Activated T-helper 2 cell treated with anti-CD3 and anti-CD28 coated beads, Interferon-gamma antibody, Interleukin-2, Interleukin-4, amounts not matched to agents 10 μg/mL and 5 μg/mL and 100 μg/mL, durations not matched to agents 14 hours and 24 hours and 36 hours (primary cell): ENCODE measurements at regions of chr5 and their contacts with region 1.

Region 1: GRCh38 chr5:1344975-1345838 is at the start of gene CLPTM1L:
- DNase-seq: peak; percentile 86
- H3K4me3 Mint-ChIP-seq: peak within 1 kb of the TSS; percentile 93
- H3K27ac Mint-ChIP-seq: peak within 1 kb of the TSS; percentile 89
- H3K4me1 Mint-ChIP-seq: peaks cover 19% of the 10 kb centered on the region
- H3K27me3 Mint-ChIP-seq: no peaks in the 10 kb centered on the region
- total RNA-seq, gene CLPTM1L: 102 and 107 TPM in 2 replicates

Region 2: GRCh38 chr5:902129-902916 is 442.9 kb before region 1 on chr5:
- intact Hi-C with region 1: no loop called
- DNase-seq: no peak
- H3K4me3 Mint-ChIP-seq: no peak overlapping the region
- H3K27ac Mint-ChIP-seq: no peak overlapping the region
- H3K4me1 Mint-ChIP-seq: no peaks in the 10 kb centered on the region
- H3K27me3 Mint-ChIP-seq: no peaks in the 10 kb centered on the region

Region 3: GRCh38 chr5:1199649-1200494 is 145.3 kb before region 1 on chr5:
- intact Hi-C with region 1: no loop called
- DNase-seq: no peak
- H3K4me3 Mint-ChIP-seq: no peak overlapping the region
- H3K27ac Mint-ChIP-seq: no peak overlapping the region
- H3K4me1 Mint-ChIP-seq: no peaks in the 10 kb centered on the region
- H3K27me3 Mint-ChIP-seq: no peaks in the 10 kb centered on the region

Region 4: DNA sequence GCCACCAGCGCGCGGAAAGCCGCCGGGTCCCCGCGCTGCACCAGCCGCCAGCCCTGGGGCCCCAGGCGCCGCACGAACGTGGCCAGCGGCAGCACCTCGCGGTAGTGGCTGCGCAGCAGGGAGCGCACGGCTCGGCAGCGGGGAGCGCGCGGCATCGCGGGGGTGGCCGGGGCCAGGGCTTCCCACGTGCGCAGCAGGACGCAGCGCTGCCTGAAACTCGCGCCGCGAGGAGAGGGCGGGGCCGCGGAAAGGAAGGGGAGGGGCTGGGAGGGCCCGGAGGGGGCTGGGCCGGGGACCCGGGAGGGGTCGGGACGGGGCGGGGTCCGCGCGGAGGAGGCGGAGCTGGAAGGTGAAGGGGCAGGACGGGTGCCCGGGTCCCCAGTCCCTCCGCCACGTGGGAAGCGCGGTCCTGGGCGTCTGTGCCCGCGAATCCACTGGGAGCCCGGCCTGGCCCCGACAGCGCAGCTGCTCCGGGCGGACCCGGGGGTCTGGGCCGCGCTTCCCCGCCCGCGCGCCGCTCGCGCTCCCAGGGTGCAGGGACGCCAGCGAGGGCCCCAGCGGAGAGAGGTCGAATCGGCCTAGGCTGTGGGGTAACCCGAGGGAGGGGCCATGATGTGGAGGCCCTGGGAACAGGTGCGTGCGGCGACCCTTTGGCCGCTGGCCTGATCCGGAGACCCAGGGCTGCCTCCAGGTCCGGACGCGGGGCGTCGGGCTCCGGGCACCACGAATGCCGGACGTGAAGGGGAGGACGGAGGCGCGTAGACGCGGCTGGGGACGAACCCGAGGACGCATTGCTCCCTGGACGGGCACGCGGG is 50.2 kb before region 1 on chr5 and contains the start of gene TERT:
- intact Hi-C with region 1: loop called (anchors 10 kb)
- DNase-seq: peak; percentile 66
- H3K4me3 Mint-ChIP-seq: peak within 1 kb of the TSS; percentile 60
- H3K27ac Mint-ChIP-seq: no peak within 1 kb of the TSS
- H3K4me1 Mint-ChIP-seq: peaks cover 6% of the 10 kb centered on the region
- H3K27me3 Mint-ChIP-seq: peaks cover 2% of the 10 kb centered on the region
- total RNA-seq, gene TERT: 11.8 and 12.0 TPM in 2 replicates

Region 5: GRCh38 chr5:1385395-1386273 is 40.4 kb after region 1 on chr5:
- intact Hi-C with region 1: loop called (anchors 2 kb)
- DNase-seq: peak; percentile 83
- H3K4me3 Mint-ChIP-seq: peak overlapping the region; percentile 95
- H3K27ac Mint-ChIP-seq: peak overlapping the region; percentile 98
- H3K4me1 Mint-ChIP-seq: peaks cover 16% of the 10 kb centered on the region
- H3K27me3 Mint-ChIP-seq: peaks cover 25% of the 10 kb centered on the region

Region 6: DNA sequence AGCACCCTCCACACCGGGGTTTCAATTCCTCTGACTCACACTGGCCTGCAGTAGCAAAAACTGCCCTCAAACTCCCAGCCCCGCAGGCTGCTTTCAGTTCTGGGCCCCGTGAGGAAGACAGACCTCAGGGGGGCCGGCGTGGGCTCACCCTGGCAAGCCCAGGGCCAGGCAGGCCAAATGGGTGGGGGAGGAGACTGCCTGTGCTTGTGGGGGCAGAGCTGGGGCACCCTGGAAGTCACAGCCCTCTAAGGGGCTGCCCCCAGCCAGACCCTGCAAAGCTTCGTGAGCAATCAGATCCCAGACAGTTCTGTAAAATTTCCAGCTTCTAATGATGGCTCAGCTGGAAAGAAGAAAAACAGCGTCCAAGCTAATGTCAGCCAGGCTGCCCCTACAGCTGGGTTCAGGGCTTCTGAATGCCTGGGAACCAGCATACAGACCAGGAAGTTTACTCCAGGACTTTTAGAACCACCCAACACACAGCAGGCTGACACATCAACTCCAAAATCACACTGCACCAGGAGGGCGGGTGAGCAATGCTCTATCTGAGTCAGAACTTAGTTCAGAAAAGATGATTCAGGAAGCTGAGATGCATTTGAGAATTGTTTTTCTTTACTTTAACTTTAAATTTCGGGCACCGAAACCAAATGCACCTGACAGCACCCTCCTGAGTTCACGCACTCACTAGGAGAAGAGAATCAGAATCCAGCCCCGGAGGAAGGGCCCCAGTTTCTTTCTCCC is 143.9 kb after region 1 on chr5:
- intact Hi-C with region 1: no loop called
- DNase-seq: no peak
- H3K4me3 Mint-ChIP-seq: no peak overlapping the region
- H3K27ac Mint-ChIP-seq: peak overlapping the region; percentile 46
- H3K4me1 Mint-ChIP-seq: peaks cover 11% of the 10 kb centered on the region
- H3K27me3 Mint-ChIP-seq: no peaks in the 10 kb centered on the region